ENCODE measurements at regions of chr1 and their contacts with region 1.

Region 1: DNA sequence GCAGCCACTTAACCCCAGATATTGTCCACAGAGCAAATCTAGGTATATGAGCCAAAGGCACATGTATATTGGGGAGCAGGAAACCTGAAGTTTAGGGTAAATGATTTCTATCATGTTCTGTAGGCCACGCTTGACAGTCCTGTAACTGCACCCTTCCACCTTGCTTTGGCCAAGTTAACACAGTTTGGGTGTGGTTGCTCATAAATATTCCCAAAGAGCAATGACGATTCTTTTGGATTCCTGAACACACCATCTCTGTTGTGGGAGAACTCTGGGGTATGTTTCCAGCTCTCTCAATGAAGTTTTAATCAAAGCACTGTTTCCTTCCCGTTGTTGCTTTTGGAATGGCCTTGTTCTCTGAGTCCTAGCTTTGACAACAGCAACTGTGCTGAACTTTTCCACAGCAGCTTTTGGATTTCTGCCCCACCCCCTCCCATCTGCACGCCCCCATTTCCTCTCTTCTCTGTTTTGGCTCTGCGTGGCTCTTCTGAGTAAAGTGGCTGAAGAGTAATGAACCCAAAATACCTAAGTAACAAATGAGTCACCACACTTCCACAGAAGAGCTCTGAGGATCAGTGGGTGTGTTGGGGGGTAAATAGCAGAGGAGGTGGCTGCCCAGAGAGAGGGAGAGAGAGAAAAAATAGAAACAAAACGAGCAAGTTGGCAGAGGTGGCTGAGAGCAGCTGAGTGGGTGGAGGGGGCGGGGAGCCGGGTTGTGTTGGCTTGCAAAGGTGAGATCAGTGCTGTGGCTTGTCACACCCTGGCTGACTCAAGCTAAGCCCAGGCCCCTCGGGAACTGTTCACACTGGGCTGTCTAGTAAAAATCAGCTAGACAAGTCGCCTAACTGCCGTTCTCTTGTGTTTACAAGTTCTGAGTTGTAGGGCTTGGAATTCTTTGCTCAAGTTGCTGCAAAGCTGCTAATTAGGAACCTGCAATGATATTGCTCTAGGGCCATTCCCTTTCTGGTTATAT is 26.9 kb upstream of the RAP1A start:
- DNase-seq: peak; percentile 98
- ATAC-seq: peak; percentile 92
- H3K4me3 ChIP-seq: peak overlapping the region; percentile 54
- H3K27ac ChIP-seq: peak overlapping the region; percentile 83
- H3K4me1 ChIP-seq: peaks cover 79% of the 10 kb centered on the region
- H3K27me3 ChIP-seq: no peaks in the 10 kb centered on the region
- CTCF ChIP-seq: no peak
- EP300 ChIP-seq: peak; percentile 78 to 93
- POLR2A ChIP-seq: peak; percentile 58; the same call in 1 of the 2 replicates
- RAD21 ChIP-seq: peak; percentile 39

Region 2: GRCh38 chr1:111570781-111571181 is 21.9 kb before region 1 on chr1:
- CTCF ChIA-PET with region 1: interaction called, 8 read pairs
- POLR2A ChIA-PET with region 1: no interaction called
- RAD21 ChIA-PET with region 1: interaction called, 12 read pairs
- SMC1A ChIA-PET with region 1: interaction called, 48 read pairs
- in situ Hi-C with region 1: no loop called
- intact Hi-C with region 1: no loop called
- DNase-seq: no peak
- ATAC-seq: peak; percentile 96
- H3K4me3 ChIP-seq: no peak overlapping the region
- H3K27ac ChIP-seq: no peak overlapping the region
- H3K4me1 ChIP-seq: no peaks in the 10 kb centered on the region
- H3K27me3 ChIP-seq: no peaks in the 10 kb centered on the region
- CTCF ChIP-seq: peak; percentile 26 to 66 (median 51); a peak in 5 of 6 replicates
- EP300 ChIP-seq: no peak
- POLR2A ChIP-seq: no peak
- RAD21 ChIP-seq: peak; percentile 64

Region 3: GRCh38 chr1:111603979-111604378 is 11.3 kb after region 1 on chr1:
- CTCF ChIA-PET with region 1: interaction called, 56 read pairs
- POLR2A ChIA-PET with region 1: interaction called, 68 read pairs
- RAD21 ChIA-PET with region 1: interaction called, 120 read pairs
- SMC1A ChIA-PET with region 1: interaction called, 200 read pairs
- in situ Hi-C with region 1: no loop called
- intact Hi-C with region 1: no loop called
- DNase-seq: no peak
- ATAC-seq: peak; percentile 56
- H3K4me3 ChIP-seq: no peak overlapping the region
- H3K27ac ChIP-seq: peak overlapping the region; percentile 98
- H3K4me1 ChIP-seq: peaks cover 54% of the 10 kb centered on the region
- H3K27me3 ChIP-seq: no peaks in the 10 kb centered on the region
- CTCF ChIP-seq: no peak
- EP300 ChIP-seq: no peak
- POLR2A ChIP-seq: peak; percentile 70
- RAD21 ChIP-seq: no peak

Region 4: GRCh38 chr1:111619635-111620440 is 27.2 kb after region 1 on chr1 and contains the start of gene RAP1A:
- CTCF ChIA-PET with region 1: interaction called, 143 read pairs
- POLR2A ChIA-PET with region 1: interaction called, 242 read pairs
- RAD21 ChIA-PET with region 1: interaction called, 331 read pairs
- SMC1A ChIA-PET with region 1: interaction called, 446 read pairs
- in situ Hi-C with region 1: no loop called
- intact Hi-C with region 1: loop called (anchors 5 kb)
- DNase-seq: peak; percentile 55
- ATAC-seq: peak; percentile 64
- H3K4me3 ChIP-seq: peak within 1 kb of the TSS; percentile 87
- H3K27ac ChIP-seq: peak within 1 kb of the TSS; percentile 94
- H3K4me1 ChIP-seq: peaks cover 34% of the 10 kb centered on the region
- H3K27me3 ChIP-seq: no peaks in the 10 kb centered on the region
- CTCF ChIP-seq: no peak
- EP300 ChIP-seq: no peak
- POLR2A ChIP-seq: peak; percentile 84
- RAD21 ChIP-seq: no peak
- polyA plus RNA-seq, gene RAP1A: 71.8 to 93.7 TPM

Region 5: DNA sequence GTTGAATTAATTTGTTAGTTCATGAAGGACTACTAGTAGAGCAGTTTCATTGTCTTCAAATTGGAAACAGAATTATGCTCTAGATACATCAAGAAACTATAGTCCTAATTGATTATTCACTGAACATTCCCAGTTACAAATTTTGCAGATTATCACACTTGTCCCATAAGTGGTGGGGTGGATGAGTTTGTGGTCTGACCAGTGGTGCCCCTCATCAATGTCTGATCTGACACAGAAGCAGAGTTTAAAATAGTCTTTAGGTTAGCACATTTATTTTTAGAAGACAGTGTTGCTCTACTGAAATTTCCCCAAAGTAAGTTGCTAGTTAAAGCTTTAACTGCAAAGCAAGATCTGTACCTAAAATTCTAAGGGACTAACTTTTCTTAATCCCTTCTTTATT is 103.7 kb after region 1 on chr1:
- CTCF ChIA-PET with region 1: interaction called, 4 read pairs
- POLR2A ChIA-PET with region 1: interaction called, 10 read pairs
- RAD21 ChIA-PET with region 1: interaction called, 17 read pairs
- SMC1A ChIA-PET with region 1: interaction called, 11 read pairs
- in situ Hi-C with region 1: no loop called
- intact Hi-C with region 1: no loop called
- DNase-seq: peak; percentile 20
- ATAC-seq: peak; percentile 70
- H3K4me3 ChIP-seq: peak overlapping the region; percentile 28; the same call in 1 of the 2 replicates
- H3K27ac ChIP-seq: peak overlapping the region; percentile 35; the same call in 1 of the 2 replicates
- H3K4me1 ChIP-seq: peaks cover 25% of the 10 kb centered on the region
- H3K27me3 ChIP-seq: no peaks in the 10 kb centered on the region
- CTCF ChIP-seq: no peak
- EP300 ChIP-seq: peak; percentile 38 to 64; a peak in 1 of 4 replicates
- POLR2A ChIP-seq: no peak
- RAD21 ChIP-seq: no peak